T-cell (primary cell): ENCODE measurements at regions of chr1 and their contacts with region 1.

Region 1: DNA sequence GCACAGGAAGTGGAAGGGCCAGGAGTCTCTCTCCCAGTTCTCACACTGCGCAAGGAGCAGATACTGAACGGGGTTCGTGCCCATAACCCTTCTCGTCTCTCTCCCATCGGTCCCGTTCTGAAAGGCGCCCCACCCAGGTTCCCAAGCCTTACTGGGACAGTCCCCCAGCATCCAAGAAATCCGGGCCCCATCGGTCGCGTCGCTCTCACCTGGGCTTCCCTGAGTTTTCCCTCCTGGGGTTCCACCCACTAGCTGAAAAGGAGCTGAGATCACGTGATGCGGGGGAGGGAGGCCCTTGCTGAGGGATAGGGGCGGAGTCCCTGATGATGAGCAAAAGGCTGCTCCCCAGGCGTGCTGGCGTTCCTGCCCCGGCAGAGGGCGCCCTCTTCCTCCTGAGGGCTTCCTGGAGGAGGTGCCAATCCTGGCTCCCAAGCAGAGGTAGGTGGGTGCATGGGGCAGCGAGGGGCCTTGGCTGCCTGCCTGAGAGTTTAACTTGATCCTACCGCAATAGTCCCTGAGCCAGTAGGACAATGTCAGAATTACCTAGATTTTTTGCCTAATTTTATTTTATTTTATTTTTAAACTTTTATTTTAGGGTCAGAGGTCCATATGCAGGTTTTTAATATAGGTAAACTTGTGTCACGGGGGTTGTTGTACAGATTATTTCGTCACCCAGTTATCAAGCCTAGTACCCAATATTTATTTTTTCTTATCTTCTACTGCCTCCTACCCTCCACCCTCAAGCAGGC is at the start of gene SPOCD1:
- DNase-seq: peak; percentile 54 to 89 (median 76)
- ATAC-seq: peak; percentile 84 to 98 (median 91)
- H3K4me3 ChIP-seq: no peak within 1 kb of the TSS
- H3K4me3 Mint-ChIP-seq: no peak within 1 kb of the TSS
- H3K27ac ChIP-seq: peak within 1 kb of the TSS; percentile 7
- H3K27ac Mint-ChIP-seq: peak within 1 kb of the TSS; percentile 57 to 79
- H3K4me1 ChIP-seq: peaks cover 0 to 8% of the 10 kb centered on the region in 2 experiments
- H3K4me1 Mint-ChIP-seq: peaks cover 6 to 16% (median 9%) of the 10 kb centered on the region in 3 donors
- H3K27me3 ChIP-seq: no peaks in the 10 kb centered on the region
- H3K27me3 Mint-ChIP-seq: no peaks in the 10 kb centered on the region
- total RNA-seq, gene SPOCD1: not detected

Region 2: GRCh38 chr1:31961536-31961935 is 145.6 kb after region 1 on chr1:
- CTCF ChIA-PET with region 1: interaction called, 6 to 26 read pairs
- POLR2A ChIA-PET with region 1: no interaction called
- DNase-seq: no peak
- ATAC-seq: no peak
- H3K4me3 ChIP-seq: no peak overlapping the region
- H3K4me3 Mint-ChIP-seq: peak overlapping the region in 2 of 3 donors; percentile 21 to 38
- H3K27ac ChIP-seq: no peak overlapping the region
- H3K27ac Mint-ChIP-seq: peak overlapping the region; percentile 84 to 90
- H3K4me1 ChIP-seq: peaks cover 18 to 55% of the 10 kb centered on the region in 2 experiments
- H3K4me1 Mint-ChIP-seq: peaks cover 49 to 68% (median 61%) of the 10 kb centered on the region in 3 donors
- H3K27me3 ChIP-seq: no peaks in the 10 kb centered on the region
- H3K27me3 Mint-ChIP-seq: no peaks in the 10 kb centered on the region